IMR-90 (cell line): ENCODE measurements at regions of chr12 and their contacts with region 1.

Region 1: GRCh38 chr12:49212572-49212971 is 23.7 kb upstream of the TUBA1A start:
- DNase-seq: no peak
- ATAC-seq: no peak
- H3K4me3 ChIP-seq: no peak overlapping the region
- H3K27ac ChIP-seq: peak overlapping the region; percentile 14; the same call in 1 of the 2 replicates
- H3K4me1 ChIP-seq: peaks cover 17% of the 10 kb centered on the region
- H3K27me3 ChIP-seq: no peaks in the 10 kb centered on the region
- CTCF ChIP-seq: no peak
- POLR2A ChIP-seq: no peak
- RAD21 ChIP-seq: no peak

Region 2: DNA sequence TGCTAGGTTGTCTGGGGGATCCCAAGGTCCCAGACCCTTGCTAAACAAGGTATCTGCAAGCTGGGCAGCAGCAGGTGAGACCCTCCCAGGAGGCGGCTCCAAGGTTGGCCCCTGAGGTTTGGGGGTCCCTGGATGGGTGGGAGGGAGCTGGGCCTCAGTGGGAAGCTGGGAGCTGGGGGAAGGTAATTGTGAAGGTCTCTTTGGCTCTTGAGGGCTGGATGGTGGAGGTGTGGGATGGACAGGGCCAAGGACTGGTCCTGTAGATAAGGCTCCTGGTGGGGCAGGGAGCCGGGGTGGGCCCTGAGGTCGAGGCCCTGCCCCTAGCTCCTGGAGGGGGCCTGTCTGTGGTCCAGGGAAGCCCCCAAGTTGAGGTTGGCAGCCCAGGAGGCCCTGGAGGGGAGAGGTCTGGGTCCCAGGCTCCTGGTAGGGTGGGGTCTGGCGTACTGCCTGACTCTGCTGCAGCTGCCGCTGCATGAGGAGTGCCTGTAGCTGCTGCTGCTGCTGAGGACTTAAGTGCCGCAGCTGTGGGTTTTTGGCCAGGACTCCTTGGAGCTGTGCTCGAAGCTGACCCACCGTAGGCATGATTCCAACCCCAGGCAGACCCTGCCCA is 180.9 kb before region 1 on chr12:
- CTCF ChIA-PET with region 1: no interaction called
- POLR2A ChIA-PET with region 1: no interaction called
- dilution Hi-C with region 1: no loop called
- in situ Hi-C with region 1: no loop called
- intact Hi-C with region 1: no loop called
- DNase-seq: no peak
- ATAC-seq: no peak
- H3K4me3 ChIP-seq: no peak overlapping the region
- H3K27ac ChIP-seq: no peak overlapping the region
- H3K4me1 ChIP-seq: no peaks in the 10 kb centered on the region
- H3K27me3 ChIP-seq: no peaks in the 10 kb centered on the region
- CTCF ChIP-seq: no peak
- POLR2A ChIP-seq: no peak
- RAD21 ChIP-seq: no peak

Region 3: DNA sequence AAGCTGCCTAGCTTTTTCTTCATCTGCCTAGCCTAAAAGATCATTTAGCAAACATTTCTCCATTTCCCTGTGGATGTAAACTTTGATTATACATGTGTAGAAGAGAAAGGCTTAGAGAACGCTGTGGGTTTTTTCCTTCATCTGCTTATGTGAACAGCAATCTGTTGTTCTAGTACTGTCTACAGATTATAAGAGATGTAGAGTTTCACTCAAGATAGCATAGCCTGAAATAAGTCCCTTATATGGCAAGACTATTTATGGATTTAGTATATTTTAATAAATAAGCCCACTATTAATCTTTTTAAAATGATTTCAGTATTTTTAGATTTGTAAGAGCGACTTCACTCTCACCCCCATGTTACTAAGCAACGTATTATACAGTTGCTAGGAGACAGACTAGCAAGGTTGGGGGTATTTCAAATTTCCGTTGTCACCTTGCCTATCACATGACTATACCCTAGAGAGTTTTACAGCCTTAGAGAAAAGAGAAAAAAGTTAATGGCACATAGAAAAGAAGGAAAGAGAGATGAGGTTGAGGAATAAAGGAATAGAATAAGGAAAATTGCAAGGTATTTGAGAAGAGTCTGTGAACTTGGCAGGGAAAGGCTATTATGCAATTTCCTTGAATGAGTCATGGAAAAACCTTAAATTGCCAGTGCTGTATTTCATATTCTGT is 11.5 kb before region 1 on chr12:
- CTCF ChIA-PET with region 1: interaction called, 3 read pairs
- POLR2A ChIA-PET with region 1: no interaction called
- dilution Hi-C with region 1: no loop called
- in situ Hi-C with region 1: no loop called
- intact Hi-C with region 1: loop called (anchors 1 kb)
- DNase-seq: peak; percentile 89
- ATAC-seq: peak; percentile 71
- H3K4me3 ChIP-seq: peak overlapping the region; percentile 40; the same call in 1 of the 2 replicates
- H3K27ac ChIP-seq: peak overlapping the region; percentile 56; the same call in 1 of the 2 replicates
- H3K4me1 ChIP-seq: peaks cover 8% of the 10 kb centered on the region
- H3K27me3 ChIP-seq: no peaks in the 10 kb centered on the region
- CTCF ChIP-seq: no peak
- POLR2A ChIP-seq: 0 out of 2 replicates have a peak, but pooled peaks have one; percentile 7
- RAD21 ChIP-seq: no peak